GM12878 (cell line): ENCODE measurements at regions of chr6 and their contacts with region 1.

Region 1: DNA sequence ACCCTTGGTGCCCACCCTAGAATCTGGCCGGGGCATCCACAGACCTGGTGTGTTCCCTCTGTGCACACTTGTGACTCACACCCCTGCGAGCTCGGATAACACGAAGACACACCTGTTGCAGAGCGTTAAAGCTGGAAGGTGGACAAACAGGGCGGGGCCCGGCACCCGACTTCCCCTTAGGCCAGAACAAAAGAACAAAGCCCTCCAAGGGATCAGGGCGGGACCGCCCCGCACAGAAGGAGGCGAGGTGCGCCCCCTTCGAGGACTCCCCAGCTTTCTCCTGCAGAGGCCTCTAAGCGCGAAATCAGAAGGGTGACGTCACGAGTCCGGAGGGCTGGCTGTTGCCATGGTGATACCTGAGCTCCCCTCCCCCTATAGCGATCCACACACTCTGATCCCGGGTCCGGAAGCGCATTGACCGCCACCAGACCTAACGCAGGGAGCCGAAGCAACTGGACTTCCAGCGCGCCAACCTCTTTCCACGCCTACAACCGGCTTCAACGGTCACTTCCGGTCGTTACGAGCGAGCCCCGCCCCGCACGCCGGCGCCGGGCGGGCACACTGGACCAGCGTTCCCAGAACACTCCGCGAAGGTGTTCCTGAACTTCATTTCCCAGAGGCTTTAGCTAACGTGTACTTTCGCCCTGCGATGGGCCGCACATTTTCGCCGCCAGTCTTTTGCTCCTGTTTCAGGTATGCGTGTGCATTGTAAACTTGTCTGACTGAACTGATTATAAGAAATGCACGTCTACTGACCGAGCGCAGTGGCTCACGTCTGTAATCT is at the start of gene ZNF184:
- DNase-seq: peak; percentile 89
- ATAC-seq: peak; percentile 91
- H3K4me3 ChIP-seq: peak within 1 kb of the TSS; percentile 97
- H3K27ac ChIP-seq: peak within 1 kb of the TSS; percentile 85
- H3K4me1 ChIP-seq: 0 out of 2 replicates have a peak, but pooled peaks cover 3% of the 10 kb centered on the region
- H3K27me3 ChIP-seq: no peaks in the 10 kb centered on the region
- CTCF ChIP-seq: peak in 1 of 3 experiments; percentile 20; a peak in 1 of 6 replicates
- EP300 ChIP-seq: 0 out of 4 replicates have a peak, but pooled peaks of 1 of the 2 experiments have one; percentile 7
- POLR2A ChIP-seq: peak; percentile 79
- RAD21 ChIP-seq: no peak
- polyA plus RNA-seq, gene ZNF184: 4.5 to 5.4 TPM

Region 2: GRCh38 chr6:26322645-26323482 is 1149.9 kb before region 1 on chr6:
- CTCF ChIA-PET with region 1: no interaction called
- POLR2A ChIA-PET with region 1: no interaction called
- RAD21 ChIA-PET with region 1: no interaction called
- SMC1A ChIA-PET with region 1: no interaction called
- in situ Hi-C with region 1: loop called (anchors 10 kb)
- intact Hi-C with region 1: loop called (anchors 10 kb)
- DNase-seq: peak; percentile 87
- ATAC-seq: peak; percentile 58
- H3K4me3 ChIP-seq: peak overlapping the region; percentile 69
- H3K27ac ChIP-seq: no peak overlapping the region
- H3K4me1 ChIP-seq: peaks cover 7% of the 10 kb centered on the region
- H3K27me3 ChIP-seq: no peaks in the 10 kb centered on the region
- CTCF ChIP-seq: no peak
- EP300 ChIP-seq: no peak; a peak in 1 of 4 replicates
- POLR2A ChIP-seq: no peak
- RAD21 ChIP-seq: no peak

Region 3: DNA sequence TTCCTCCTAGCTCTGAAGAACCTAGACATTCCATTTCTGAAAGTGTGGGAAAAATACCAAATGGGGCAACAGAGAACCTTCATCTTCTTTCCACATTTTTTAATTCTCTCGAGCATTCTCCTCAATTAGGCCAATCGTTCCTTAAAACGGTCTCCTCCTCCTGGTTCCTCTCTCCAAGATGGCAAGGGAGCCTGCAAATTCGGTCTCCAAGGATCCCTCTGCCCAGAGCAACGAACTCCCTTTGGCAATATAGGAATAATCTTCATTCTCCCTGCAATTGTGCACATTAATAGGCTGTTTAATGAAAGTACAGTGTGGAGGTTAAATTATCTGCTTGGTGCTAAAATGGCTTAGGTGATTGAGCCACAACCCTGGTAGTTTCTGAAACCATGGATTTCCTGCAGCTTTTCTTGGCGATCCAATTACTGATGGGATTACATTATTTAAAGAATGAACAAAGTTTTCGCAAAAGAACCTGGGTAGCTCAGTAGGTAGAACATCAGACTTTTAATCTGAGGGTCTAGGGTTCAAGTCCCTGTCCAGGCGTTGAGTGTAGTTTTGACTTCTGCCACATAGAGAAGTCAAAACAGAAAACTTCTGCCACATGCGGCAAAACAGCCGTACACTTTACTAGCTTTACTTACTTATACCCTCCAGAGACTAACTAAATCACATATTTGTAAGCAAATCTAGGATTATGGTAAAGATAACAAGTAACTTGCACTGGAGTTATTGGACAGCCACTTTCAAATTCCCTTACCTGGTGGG is 103.0 kb after region 1 on chr6:
- CTCF ChIA-PET with region 1: no interaction called
- POLR2A ChIA-PET with region 1: no interaction called
- RAD21 ChIA-PET with region 1: no interaction called
- SMC1A ChIA-PET with region 1: no interaction called
- in situ Hi-C with region 1: no loop called
- intact Hi-C with region 1: no loop called
- DNase-seq: no peak
- ATAC-seq: peak; percentile 50
- H3K4me3 ChIP-seq: no peak overlapping the region
- H3K27ac ChIP-seq: no peak overlapping the region
- H3K4me1 ChIP-seq: no peaks in the 10 kb centered on the region
- H3K27me3 ChIP-seq: no peaks in the 10 kb centered on the region
- CTCF ChIP-seq: no peak
- EP300 ChIP-seq: no peak
- POLR2A ChIP-seq: no peak
- RAD21 ChIP-seq: no peak